PC-3 (cell line): ENCODE measurements at regions of chr3 and their contacts with region 1.

Region 1: DNA sequence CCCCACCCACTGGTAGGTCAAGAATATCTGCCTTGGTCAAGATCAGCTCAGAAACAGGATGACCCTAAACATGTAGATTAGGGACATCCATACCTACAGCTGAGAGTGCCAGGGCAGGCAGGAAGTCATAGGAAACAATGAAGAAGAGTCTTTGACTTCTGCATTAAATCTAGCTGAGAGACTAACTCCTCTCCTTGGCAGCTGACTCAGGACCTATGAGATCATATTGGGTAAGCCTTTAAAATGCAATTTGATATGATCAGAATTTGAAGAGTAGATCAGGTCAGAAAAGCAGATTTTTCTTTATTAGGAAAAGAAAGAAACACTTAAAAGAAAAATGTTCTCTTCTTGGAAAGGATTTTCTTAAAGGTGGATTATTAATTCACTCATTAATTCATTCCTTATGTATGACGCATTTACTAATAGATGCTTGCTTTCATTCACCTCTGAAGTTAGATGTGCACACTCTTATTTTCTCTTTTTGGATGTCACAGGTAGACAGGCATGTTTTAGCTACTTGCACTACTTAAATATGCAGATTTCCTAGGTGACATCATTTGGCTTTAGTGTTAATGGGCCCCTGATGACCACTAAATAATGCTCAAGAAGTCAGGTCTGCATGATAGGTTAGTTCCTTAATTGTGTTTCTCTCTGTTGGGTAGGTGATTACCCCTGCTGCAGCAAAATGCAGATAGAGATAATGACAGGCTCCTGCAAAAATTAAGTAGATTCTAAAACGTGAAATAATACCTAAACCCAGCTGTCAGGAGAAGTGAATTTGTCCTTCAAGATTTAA is 35.7 kb upstream of the GSK3B start:
- DNase-seq: peak; percentile 72
- ATAC-seq: peak; percentile 84
- H3K4me3 ChIP-seq: no peak overlapping the region
- H3K27ac ChIP-seq: no peak overlapping the region
- H3K4me1 ChIP-seq: peaks cover 12% of the 10 kb centered on the region
- H3K27me3 ChIP-seq: no peaks in the 10 kb centered on the region
- CTCF ChIP-seq: no peak

Region 2: DNA sequence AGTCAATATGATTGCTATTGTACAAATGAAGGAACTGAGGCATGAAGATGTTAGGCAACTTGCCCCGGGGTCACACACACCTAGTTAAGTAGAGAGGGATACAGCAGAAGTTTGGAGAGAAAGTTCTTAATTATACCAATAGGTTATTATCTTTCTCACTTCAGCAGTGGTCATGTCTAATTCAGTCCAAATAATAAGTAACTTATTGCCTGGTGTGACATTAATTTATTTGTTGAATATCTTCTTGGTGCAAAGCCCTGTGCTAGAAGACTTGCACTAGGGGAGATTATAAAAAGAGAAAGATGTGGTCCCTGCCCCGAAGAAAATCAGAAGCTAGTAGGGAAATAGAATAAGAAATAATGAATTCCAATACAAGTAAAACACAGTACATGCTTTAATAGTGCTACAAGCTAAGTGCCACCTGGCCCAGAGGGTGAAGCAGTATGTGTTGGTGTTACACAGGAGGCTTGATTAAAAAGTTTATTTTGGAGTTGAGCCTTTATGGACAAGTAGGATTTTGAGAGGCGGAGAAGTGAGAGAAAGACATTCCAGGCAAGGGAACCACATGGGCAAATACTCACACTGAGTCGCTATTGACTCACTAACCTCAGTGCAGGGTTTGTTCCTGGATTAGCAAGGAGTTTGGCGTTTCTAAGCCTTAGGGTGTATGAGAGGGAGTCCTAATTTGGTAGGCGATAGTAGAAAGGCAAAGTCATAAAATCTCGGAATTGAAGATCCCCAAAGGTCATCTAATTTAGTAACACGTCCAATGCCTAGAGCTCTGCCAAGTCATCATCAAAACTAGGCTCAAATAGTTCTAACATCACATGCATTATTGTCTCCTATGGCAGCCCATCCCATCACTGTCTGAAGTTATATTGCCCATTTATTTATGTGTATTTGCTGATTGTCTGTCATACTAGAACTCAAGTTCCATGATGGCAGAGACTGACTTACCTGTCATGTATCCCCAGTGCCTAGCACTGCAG is 16.5 kb before region 1 on chr3:
- CTCF ChIA-PET with region 1: no interaction called
- POLR2A ChIA-PET with region 1: no interaction called
- intact Hi-C with region 1: loop called (anchors 1 kb)
- DNase-seq: peak; percentile 98
- ATAC-seq: peak; percentile 99
- H3K4me3 ChIP-seq: no peak overlapping the region
- H3K27ac ChIP-seq: peak overlapping the region; percentile 80
- H3K4me1 ChIP-seq: peaks cover 33% of the 10 kb centered on the region
- H3K27me3 ChIP-seq: no peaks in the 10 kb centered on the region
- CTCF ChIP-seq: no peak

Region 3: DNA sequence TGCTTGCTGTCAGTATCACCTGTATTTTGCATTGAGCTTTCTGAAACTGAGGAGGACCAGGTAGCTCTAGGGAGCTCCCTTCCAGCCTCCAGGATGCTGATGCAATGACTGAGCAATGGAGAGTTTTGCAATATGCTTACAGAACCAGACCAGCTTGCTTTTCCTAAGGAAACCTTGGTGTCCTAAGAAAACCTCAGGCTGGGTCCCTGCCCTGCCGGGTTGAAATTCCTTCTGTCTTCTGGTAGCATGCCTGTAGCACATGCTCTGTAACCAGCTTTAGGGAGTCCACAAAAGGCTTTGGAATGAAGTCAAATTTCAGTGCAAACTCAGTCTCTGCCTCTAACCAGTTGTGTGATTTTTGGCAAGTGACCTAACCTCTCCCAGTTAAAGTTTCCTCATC is 30.1 kb after region 1 on chr3:
- CTCF ChIA-PET with region 1: no interaction called
- POLR2A ChIA-PET with region 1: no interaction called
- intact Hi-C with region 1: no loop called
- DNase-seq: peak; percentile 99
- ATAC-seq: peak; percentile 88
- H3K4me3 ChIP-seq: no peak overlapping the region
- H3K27ac ChIP-seq: peak overlapping the region; percentile 69
- H3K4me1 ChIP-seq: peaks cover 26% of the 10 kb centered on the region
- H3K27me3 ChIP-seq: no peaks in the 10 kb centered on the region
- CTCF ChIP-seq: no peak

Region 4: GRCh38 chr3:120182724-120183524 is 53.0 kb after region 1 on chr3:
- CTCF ChIA-PET with region 1: no interaction called
- POLR2A ChIA-PET with region 1: no interaction called
- intact Hi-C with region 1: loop called (anchors 1 kb)
- DNase-seq: peak; percentile 67
- ATAC-seq: peak; percentile 68
- H3K4me3 ChIP-seq: no peak overlapping the region
- H3K27ac ChIP-seq: no peak overlapping the region
- H3K4me1 ChIP-seq: peaks cover 32% of the 10 kb centered on the region
- H3K27me3 ChIP-seq: no peaks in the 10 kb centered on the region
- CTCF ChIP-seq: peak; percentile 91